ENCODE measurements at regions of chr1 and their contacts with region 1.

Region 1: GRCh38 chr1:231757101-231757404 is 130.5 kb downstream of the DISC1 start:
- DNase-seq: no peak
- H3K4me3 Mint-ChIP-seq: no peak overlapping the region
- H3K27ac Mint-ChIP-seq: no peak overlapping the region
- H3K4me1 Mint-ChIP-seq: no peaks in the 10 kb centered on the region
- H3K27me3 Mint-ChIP-seq: no peaks in the 10 kb centered on the region

Region 2: GRCh38 chr1:231636157-231636556 is 120.9 kb before region 1 on chr1:
- intact Hi-C with region 1: no loop called
- DNase-seq: no peak
- H3K4me3 Mint-ChIP-seq: no peak overlapping the region
- H3K27ac Mint-ChIP-seq: no peak overlapping the region
- H3K4me1 Mint-ChIP-seq: no peaks in the 10 kb centered on the region
- H3K27me3 Mint-ChIP-seq: peaks cover 6% of the 10 kb centered on the region

Region 3: DNA sequence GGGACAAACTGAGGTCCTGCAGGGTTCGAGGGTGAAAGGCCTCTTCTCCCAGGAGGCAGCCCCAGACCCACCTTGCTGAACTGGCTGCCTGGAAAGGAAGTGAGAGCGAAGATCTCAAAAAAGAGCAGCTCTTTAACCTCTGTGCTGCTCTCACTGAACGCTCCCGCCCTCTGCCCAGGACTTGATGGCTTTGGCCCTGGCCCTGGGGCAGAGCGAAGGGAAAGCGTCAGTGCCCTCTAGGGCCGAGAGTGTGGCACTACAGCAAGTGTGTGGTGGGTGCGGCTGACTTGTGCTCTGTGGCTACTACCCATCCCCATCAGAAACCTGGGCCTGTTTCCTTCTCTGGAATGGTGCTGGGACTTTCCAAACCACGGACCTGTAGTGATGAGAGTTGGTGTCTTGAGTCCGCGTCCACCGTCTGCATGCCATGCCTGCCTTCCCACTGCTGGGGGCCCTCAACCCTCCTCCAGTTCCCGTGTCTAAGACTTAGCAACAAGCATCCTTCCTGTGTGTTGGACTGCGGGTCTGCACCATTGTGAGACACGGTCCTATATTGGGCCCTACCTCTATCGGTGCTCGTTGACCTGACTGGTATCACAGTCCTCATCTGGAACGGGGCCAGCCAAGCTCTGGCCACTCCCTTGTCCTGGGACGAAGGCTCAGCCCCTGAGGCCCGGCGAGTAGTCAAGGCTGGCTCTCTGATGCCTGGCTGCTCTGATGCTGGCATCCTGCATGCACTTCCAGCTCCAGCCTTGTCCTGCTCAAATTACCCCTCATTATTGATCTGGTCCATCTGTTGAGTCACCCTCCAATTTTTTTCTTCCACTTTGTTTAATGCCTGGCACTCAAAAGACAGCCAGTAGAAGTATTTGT is 49.8 kb after region 1 on chr1:
- intact Hi-C with region 1: loop called (anchors 2 kb)
- DNase-seq: peak; percentile 12
- H3K4me3 Mint-ChIP-seq: no peak overlapping the region
- H3K27ac Mint-ChIP-seq: no peak overlapping the region
- H3K4me1 Mint-ChIP-seq: no peaks in the 10 kb centered on the region
- H3K27me3 Mint-ChIP-seq: no peaks in the 10 kb centered on the region

Region 4: GRCh38 chr1:232029315-232029714 is 272.3 kb after region 1 on chr1:
- intact Hi-C with region 1: no loop called
- DNase-seq: no peak
- H3K4me3 Mint-ChIP-seq: no peak overlapping the region
- H3K27ac Mint-ChIP-seq: no peak overlapping the region
- H3K4me1 Mint-ChIP-seq: no peaks in the 10 kb centered on the region
- H3K27me3 Mint-ChIP-seq: peaks cover 3% of the 10 kb centered on the region

Measured in activated T-helper 2 cell treated with anti-CD3 and anti-CD28 coated beads, Interferon-gamma antibody, Interleukin-2, Interleukin-4, amounts not matched to agents 10 μg/mL and 5 μg/mL and 100 μg/mL, durations not matched to agents 14 hours and 24 hours and 36 hours (primary cell).